Naive thymus-derived CD4-positive, alpha-beta T cell (primary cell): ENCODE measurements at regions of chr13 and their contacts with region 1.

Region 1: GRCh38 chr13:30465585-30466357 is at the start of gene HMGB1:
- DNase-seq: peak; percentile 84 to 98 (median 96)
- ATAC-seq: peak; percentile 90
- H3K4me3 ChIP-seq: peak within 1 kb of the TSS; percentile 83
- H3K4me3 Mint-ChIP-seq: peak within 1 kb of the TSS; percentile 86 to 99 (median 94)
- H3K27ac ChIP-seq: peak within 1 kb of the TSS; percentile 97
- H3K27ac Mint-ChIP-seq: peak within 1 kb of the TSS; percentile 93 to 100 (median 98)
- H3K4me1 ChIP-seq: peaks cover 23 to 32% of the 10 kb centered on the region in 2 donors
- H3K4me1 Mint-ChIP-seq: peaks cover 12 to 40% (median 30%) of the 10 kb centered on the region in 7 donors
- H3K27me3 ChIP-seq: no peaks in the 10 kb centered on the region
- H3K27me3 Mint-ChIP-seq: peaks cover 0 to 7% (median 0%) of the 10 kb centered on the region in 5 donors
- total RNA-seq, gene HMGB1: 294 to 530 (median 319) TPM

Region 2: GRCh38 chr13:29850224-29850898 is 615.4 kb before region 1 on chr13 and contains the start of gene UBL3:
- CTCF ChIA-PET with region 1: interaction called, 3 read pairs
- POLR2A ChIA-PET with region 1: interaction called, 4 read pairs
- intact Hi-C with region 1: loop called (anchors 1 to 2 kb)
- DNase-seq: peak; percentile 88 to 95 (median 92)
- ATAC-seq: peak; percentile 97
- H3K4me3 ChIP-seq: peak within 1 kb of the TSS; percentile 78
- H3K4me3 Mint-ChIP-seq: peak within 1 kb of the TSS; percentile 91 to 99 (median 96)
- H3K27ac ChIP-seq: peak within 1 kb of the TSS; percentile 98
- H3K27ac Mint-ChIP-seq: peak within 1 kb of the TSS; percentile 91 to 100 (median 99)
- H3K4me1 ChIP-seq: peaks cover 5 to 13% of the 10 kb centered on the region in 2 donors
- H3K4me1 Mint-ChIP-seq: peaks cover 10 to 42% (median 24%) of the 10 kb centered on the region in 7 donors
- H3K27me3 ChIP-seq: no peaks in the 10 kb centered on the region
- H3K27me3 Mint-ChIP-seq: no peaks in the 10 kb centered on the region
- total RNA-seq, gene UBL3: 12.7 to 34.5 (median 28.9) TPM

Region 3: GRCh38 chr13:30148171-30148754 is 317.5 kb before region 1 on chr13:
- CTCF ChIA-PET with region 1: interaction called, 3 read pairs
- POLR2A ChIA-PET with region 1: interaction called, 12 read pairs
- intact Hi-C with region 1: loop called (anchors 5 kb)
- DNase-seq: peak in 7 of 9 donors; percentile 43 to 83 (median 69)
- ATAC-seq: peak; percentile 89
- H3K4me3 ChIP-seq: peak overlapping the region; percentile 7
- H3K4me3 Mint-ChIP-seq: peak overlapping the region; percentile 43 to 81 (median 75)
- H3K27ac ChIP-seq: peak overlapping the region; percentile 37
- H3K27ac Mint-ChIP-seq: peak overlapping the region; percentile 87 to 98 (median 93)
- H3K4me1 ChIP-seq: peaks cover 59 to 83% of the 10 kb centered on the region in 2 donors
- H3K4me1 Mint-ChIP-seq: peaks cover 41 to 96% (median 88%) of the 10 kb centered on the region in 7 donors
- H3K27me3 ChIP-seq: no peaks in the 10 kb centered on the region
- H3K27me3 Mint-ChIP-seq: no peaks in the 10 kb centered on the region

Region 4: GRCh38 chr13:30355384-30355699 is 110.4 kb before region 1 on chr13:
- CTCF ChIA-PET with region 1: interaction called, 12 read pairs
- POLR2A ChIA-PET with region 1: no interaction called
- intact Hi-C with region 1: loop called in 1 of 2 experiments (anchors 1 kb)
- DNase-seq: peak in 3 of 9 donors; percentile 26 to 40 (median 28)
- ATAC-seq: peak; percentile 84
- H3K4me3 ChIP-seq: no peak overlapping the region
- H3K4me3 Mint-ChIP-seq: peak overlapping the region in 7 of 10 donors; percentile 14 to 61 (median 32)
- H3K27ac ChIP-seq: no peak overlapping the region
- H3K27ac Mint-ChIP-seq: peak overlapping the region in 3 of 9 donors; percentile 8 to 75 (median 39)
- H3K4me1 ChIP-seq: peaks cover 0 to 4% of the 10 kb centered on the region in 2 donors
- H3K4me1 Mint-ChIP-seq: peaks cover 10 to 40% (median 35%) of the 10 kb centered on the region in 7 donors
- H3K27me3 ChIP-seq: no peaks in the 10 kb centered on the region
- H3K27me3 Mint-ChIP-seq: no peaks in the 10 kb centered on the region

Region 5: GRCh38 chr13:30422054-30422839 is 43.5 kb before region 1 on chr13 and contains the start of gene UBE2L5:
- CTCF ChIA-PET with region 1: no interaction called
- POLR2A ChIA-PET with region 1: interaction called, 5 read pairs
- intact Hi-C with region 1: loop called (anchors 1 to 2 kb)
- DNase-seq: peak; percentile 41 to 89 (median 56)
- ATAC-seq: peak; percentile 92
- H3K4me3 ChIP-seq: peak within 1 kb of the TSS; percentile 67
- H3K4me3 Mint-ChIP-seq: peak within 1 kb of the TSS; percentile 80 to 94 (median 89)
- H3K27ac ChIP-seq: peak within 1 kb of the TSS; percentile 38
- H3K27ac Mint-ChIP-seq: peak within 1 kb of the TSS; percentile 64 to 93 (median 86)
- H3K4me1 ChIP-seq: no peaks in the 10 kb centered on the region
- H3K4me1 Mint-ChIP-seq: peaks cover 7 to 29% (median 15%) of the 10 kb centered on the region in 7 donors
- H3K27me3 ChIP-seq: no peaks in the 10 kb centered on the region
- H3K27me3 Mint-ChIP-seq: no peaks in the 10 kb centered on the region
- total RNA-seq, gene UBE2L5: not detected

Region 6: GRCh38 chr13:30617315-30618185 is 151.8 kb after region 1 on chr13 and contains the start of gene USPL1:
- CTCF ChIA-PET with region 1: interaction called, 6 read pairs
- POLR2A ChIA-PET with region 1: interaction called, 66 read pairs
- intact Hi-C with region 1: loop called (anchors 1 kb)
- DNase-seq: peak; percentile 92 to 99 (median 99)
- ATAC-seq: peak; percentile 95
- H3K4me3 ChIP-seq: peak within 1 kb of the TSS; percentile 84
- H3K4me3 Mint-ChIP-seq: no peak within 1 kb of the TSS
- H3K27ac ChIP-seq: peak within 1 kb of the TSS; percentile 97
- H3K27ac Mint-ChIP-seq: no peak within 1 kb of the TSS
- H3K4me1 ChIP-seq: peaks cover 11 to 13% of the 10 kb centered on the region in 2 donors
- H3K4me1 Mint-ChIP-seq: peaks cover 13 to 53% (median 36%) of the 10 kb centered on the region in 7 donors
- H3K27me3 ChIP-seq: no peaks in the 10 kb centered on the region
- H3K27me3 Mint-ChIP-seq: no peaks in the 10 kb centered on the region
- total RNA-seq, gene USPL1: 22.4 to 34.7 (median 30.4) TPM

Region 7: GRCh38 chr13:31161828-31162590 is 696.2 kb after region 1 on chr13 and contains the start of gene HSPH1:
- CTCF ChIA-PET with region 1: no interaction called
- POLR2A ChIA-PET with region 1: no interaction called
- intact Hi-C with region 1: loop called (anchors 1 to 2 kb)
- DNase-seq: peak; percentile 95 to 100 (median 99)
- ATAC-seq: peak; percentile 91
- H3K4me3 ChIP-seq: peak within 1 kb of the TSS; percentile 89
- H3K4me3 Mint-ChIP-seq: peak within 1 kb of the TSS; percentile 92 to 98 (median 94)
- H3K27ac ChIP-seq: peak within 1 kb of the TSS; percentile 96
- H3K27ac Mint-ChIP-seq: peak within 1 kb of the TSS; percentile 98 to 99 (median 99)
- H3K4me1 ChIP-seq: peaks cover 22 to 26% of the 10 kb centered on the region in 2 donors
- H3K4me1 Mint-ChIP-seq: peaks cover 23 to 52% (median 47%) of the 10 kb centered on the region in 7 donors
- H3K27me3 ChIP-seq: no peaks in the 10 kb centered on the region
- H3K27me3 Mint-ChIP-seq: peaks cover 0 to 3% (median 0%) of the 10 kb centered on the region in 5 donors
- total RNA-seq, gene HSPH1: 65.5 to 154 (median 107) TPM